ENCODE measurements at regions of chr19 and their contacts with region 1.

Region 1: GRCh38 chr19:14556662-14557188 is 15.1 kb downstream of the NDUFB7 start:
- DNase-seq: peak; percentile 94
- H3K4me3 ChIP-seq: peak overlapping the region in 1 of 2 experiments; percentile 42; a peak in 1 of 4 replicates
- H3K27ac ChIP-seq: no peak overlapping the region; a peak in 1 of 4 replicates
- H3K4me1 ChIP-seq: peaks cover 0 to 15% of the 10 kb centered on the region in 2 experiments; a peak in 1 of 4 replicates
- H3K27me3 ChIP-seq: no peaks in the 10 kb centered on the region
- CTCF ChIP-seq: peak; percentile 93
- EP300 ChIP-seq: no peak
- RAD21 ChIP-seq: peak; percentile 45

Region 2: DNA sequence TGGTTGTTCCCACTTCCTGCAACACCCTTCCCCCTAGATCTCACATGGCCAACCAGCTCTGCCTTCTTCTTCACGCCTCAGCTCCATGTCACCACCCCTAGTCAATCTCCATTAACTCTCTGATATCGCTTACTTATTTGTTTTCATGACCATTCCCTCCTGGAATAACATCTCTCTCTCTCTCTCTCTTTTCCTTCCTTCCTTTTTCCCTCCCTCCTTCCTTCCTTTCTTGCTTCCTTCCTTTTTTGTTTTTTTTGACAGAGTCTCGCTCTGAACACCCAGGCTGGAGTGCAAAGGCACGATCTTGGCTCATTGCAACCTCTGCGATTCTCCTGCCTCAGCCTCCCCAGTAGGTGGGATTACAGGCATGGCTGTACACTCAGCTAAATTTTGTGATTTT is 305.9 kb before region 1 on chr19:
- CTCF ChIA-PET with region 1: no interaction called
- POLR2A ChIA-PET with region 1: no interaction called
- DNase-seq: no peak
- H3K4me3 ChIP-seq: no peak overlapping the region
- H3K27ac ChIP-seq: no peak overlapping the region
- H3K4me1 ChIP-seq: peaks cover 4 to 5% of the 10 kb centered on the region in 2 experiments; a peak in 1 of 4 replicates
- H3K27me3 ChIP-seq: no peaks in the 10 kb centered on the region
- CTCF ChIP-seq: no peak
- EP300 ChIP-seq: no peak
- RAD21 ChIP-seq: no peak

Region 3: DNA sequence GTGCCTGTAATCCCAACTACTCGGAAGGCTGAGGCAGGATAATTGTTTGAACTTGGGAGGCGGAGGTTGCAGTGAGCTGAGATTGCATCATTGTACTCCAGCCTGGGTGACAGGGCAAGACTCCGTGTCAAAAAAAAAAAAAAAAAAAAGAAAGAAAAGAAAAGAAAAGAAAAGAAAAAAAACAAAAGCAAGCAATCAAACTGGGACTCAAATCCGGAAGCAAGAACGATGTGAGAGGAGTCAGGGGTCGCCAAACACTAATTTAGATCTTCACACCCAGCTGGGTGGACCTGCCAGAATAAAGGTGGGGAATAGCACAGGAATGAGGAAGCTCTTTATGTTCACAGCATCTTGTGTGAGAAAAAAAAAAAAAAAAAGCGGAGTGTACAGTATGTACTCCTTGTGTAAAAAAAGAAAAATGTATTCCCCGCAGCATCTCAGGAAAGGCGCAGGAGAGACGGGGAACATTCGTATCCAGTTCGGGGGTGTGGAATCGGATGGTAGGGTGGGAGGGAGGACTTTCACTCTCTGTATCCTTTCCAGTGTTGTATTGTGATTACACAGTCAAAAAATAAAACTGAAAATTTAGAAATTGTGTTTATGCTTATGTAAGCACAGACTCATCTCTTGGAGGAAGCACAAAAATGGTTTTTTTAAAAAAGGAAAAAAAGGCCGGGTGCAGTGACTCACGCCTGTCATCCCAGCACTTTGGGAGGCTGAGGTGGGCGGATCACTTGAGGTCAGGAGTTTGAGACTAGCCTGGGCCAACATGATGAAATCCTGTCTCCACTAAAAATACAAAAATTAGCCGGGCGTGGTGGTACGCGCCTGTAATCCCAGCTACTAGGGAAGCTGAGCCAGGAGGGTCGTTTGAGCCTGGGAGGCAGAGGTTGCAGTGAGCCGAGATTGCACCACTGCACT is 46.2 kb before region 1 on chr19:
- CTCF ChIA-PET with region 1: no interaction called
- POLR2A ChIA-PET with region 1: no interaction called
- DNase-seq: no peak
- H3K4me3 ChIP-seq: no peak overlapping the region
- H3K27ac ChIP-seq: peak overlapping the region in 1 of 2 experiments; percentile 80; a peak in 2 of 4 replicates
- H3K4me1 ChIP-seq: peaks cover 5 to 14% of the 10 kb centered on the region in 2 experiments; a peak in 2 of 4 replicates
- H3K27me3 ChIP-seq: no peaks in the 10 kb centered on the region
- CTCF ChIP-seq: no peak
- EP300 ChIP-seq: no peak
- RAD21 ChIP-seq: no peak

Region 4: GRCh38 chr19:14536926-14537692 is 19.6 kb before region 1 on chr19:
- CTCF ChIA-PET with region 1: interaction called, 28 read pairs
- POLR2A ChIA-PET with region 1: no interaction called
- DNase-seq: peak; percentile 80
- H3K4me3 ChIP-seq: no peak overlapping the region; a peak in 1 of 4 replicates
- H3K27ac ChIP-seq: no peak overlapping the region
- H3K4me1 ChIP-seq: peaks cover 0 to 15% of the 10 kb centered on the region in 2 experiments; a peak in 1 of 4 replicates
- H3K27me3 ChIP-seq: no peaks in the 10 kb centered on the region
- CTCF ChIP-seq: no peak
- EP300 ChIP-seq: no peak
- RAD21 ChIP-seq: no peak

Region 5: GRCh38 chr19:14544977-14545715 is 11.6 kb before region 1 on chr19:
- CTCF ChIA-PET with region 1: interaction called, 35 read pairs
- POLR2A ChIA-PET with region 1: no interaction called
- DNase-seq: no peak
- H3K4me3 ChIP-seq: no peak overlapping the region
- H3K27ac ChIP-seq: no peak overlapping the region
- H3K4me1 ChIP-seq: peaks cover 0 to 2% of the 10 kb centered on the region in 2 experiments; a peak in 1 of 4 replicates
- H3K27me3 ChIP-seq: no peaks in the 10 kb centered on the region
- CTCF ChIP-seq: no peak
- EP300 ChIP-seq: no peak
- RAD21 ChIP-seq: no peak

Region 6: GRCh38 chr19:14571695-14572490 is 15.2 kb after region 1 on chr19 and contains the start of gene NDUFB7:
- CTCF ChIA-PET with region 1: interaction called, 60 read pairs
- POLR2A ChIA-PET with region 1: no interaction called
- DNase-seq: peak; percentile 93
- H3K4me3 ChIP-seq: peak within 1 kb of the TSS; percentile 79 to 100
- H3K27ac ChIP-seq: peak within 1 kb of the TSS in 1 of 2 experiments; percentile 76; a peak in 1 of 4 replicates
- H3K4me1 ChIP-seq: peaks cover 0 to 8% of the 10 kb centered on the region in 2 experiments; a peak in 2 of 4 replicates
- H3K27me3 ChIP-seq: no peaks in the 10 kb centered on the region
- CTCF ChIP-seq: peak; percentile 78
- EP300 ChIP-seq: peak in 1 of 2 experiments; percentile 37; a peak in 3 of 4 replicates
- RAD21 ChIP-seq: no peak
- polyA plus RNA-seq, gene NDUFB7: 458 and 465 TPM in 2 replicates

Region 7: DNA sequence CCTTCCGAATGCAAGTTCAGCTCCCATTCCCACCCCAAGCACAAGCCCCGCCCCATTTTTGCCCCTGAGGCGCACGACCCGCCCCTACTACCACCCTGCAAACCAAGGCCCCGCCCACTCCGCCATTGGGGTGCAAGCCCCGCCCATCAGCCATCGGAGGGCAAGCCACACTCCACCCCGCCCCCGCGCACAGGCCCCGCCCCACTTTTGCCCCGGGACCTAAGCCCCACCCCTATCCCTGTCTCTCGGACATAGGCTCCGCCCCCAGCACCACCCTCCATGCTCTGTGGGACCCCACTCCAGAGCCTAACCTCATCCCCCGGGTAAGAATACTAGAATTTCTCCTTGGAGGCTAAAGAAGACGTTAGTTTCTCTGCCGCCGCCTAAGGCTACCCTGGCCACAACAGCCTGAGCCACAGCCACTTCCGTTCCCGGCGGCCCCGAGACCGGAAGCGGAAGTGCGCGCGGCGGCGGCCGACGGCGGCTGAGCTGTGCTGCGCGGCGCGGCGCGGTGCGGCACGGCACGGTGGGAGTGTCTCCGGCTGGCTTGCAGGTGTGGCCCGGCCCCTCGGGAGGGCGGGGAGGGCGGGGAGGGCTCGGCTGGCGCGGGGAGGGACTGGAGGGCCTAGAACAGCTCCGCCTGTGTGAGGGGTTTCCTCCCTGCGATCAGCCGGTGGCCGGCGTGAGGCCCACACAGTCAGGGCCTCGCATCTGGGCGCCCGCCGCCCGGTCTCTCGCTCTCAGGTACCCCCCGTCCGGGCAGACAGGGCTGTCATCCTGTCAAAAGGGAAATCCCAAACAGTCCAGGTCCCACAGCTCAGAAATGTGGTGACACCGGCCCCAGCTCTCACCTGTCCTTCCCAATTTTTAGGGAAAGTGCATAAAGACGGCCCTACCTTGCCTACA is 133.1 kb after region 1 on chr19 and contains the start of gene ZNF333:
- CTCF ChIA-PET with region 1: interaction called, 11 read pairs
- POLR2A ChIA-PET with region 1: no interaction called
- DNase-seq: peak; percentile 99
- H3K4me3 ChIP-seq: peak within 1 kb of the TSS; percentile 78 to 93
- H3K27ac ChIP-seq: peak within 1 kb of the TSS; percentile 91 to 96
- H3K4me1 ChIP-seq: peaks cover 0 to 7% of the 10 kb centered on the region in 2 experiments; a peak in 3 of 4 replicates
- H3K27me3 ChIP-seq: no peaks in the 10 kb centered on the region
- CTCF ChIP-seq: no peak
- EP300 ChIP-seq: no peak
- RAD21 ChIP-seq: no peak
- polyA plus RNA-seq, gene ZNF333: 15.2 and 19.6 TPM in 2 replicates